Activated naive CD4-positive, alpha-beta T cell treated with anti-CD3 and anti-CD28 coated beads, Interleukin-2, amount 10 ng/mL, durations not matched to agents 7 days and 5 days (primary cell): ENCODE measurements at regions of chr1 and their contacts with region 1.

Region 1: GRCh38 chr1:22704440-22705067 is 6.1 kb upstream of the EPHB2 start:
- DNase-seq: peak; percentile 82
- H3K4me3 Mint-ChIP-seq: no peak overlapping the region
- H3K27ac Mint-ChIP-seq: no peak overlapping the region
- H3K4me1 Mint-ChIP-seq: no peaks in the 10 kb centered on the region
- H3K27me3 Mint-ChIP-seq: peaks cover 46% of the 10 kb centered on the region

Region 2: DNA sequence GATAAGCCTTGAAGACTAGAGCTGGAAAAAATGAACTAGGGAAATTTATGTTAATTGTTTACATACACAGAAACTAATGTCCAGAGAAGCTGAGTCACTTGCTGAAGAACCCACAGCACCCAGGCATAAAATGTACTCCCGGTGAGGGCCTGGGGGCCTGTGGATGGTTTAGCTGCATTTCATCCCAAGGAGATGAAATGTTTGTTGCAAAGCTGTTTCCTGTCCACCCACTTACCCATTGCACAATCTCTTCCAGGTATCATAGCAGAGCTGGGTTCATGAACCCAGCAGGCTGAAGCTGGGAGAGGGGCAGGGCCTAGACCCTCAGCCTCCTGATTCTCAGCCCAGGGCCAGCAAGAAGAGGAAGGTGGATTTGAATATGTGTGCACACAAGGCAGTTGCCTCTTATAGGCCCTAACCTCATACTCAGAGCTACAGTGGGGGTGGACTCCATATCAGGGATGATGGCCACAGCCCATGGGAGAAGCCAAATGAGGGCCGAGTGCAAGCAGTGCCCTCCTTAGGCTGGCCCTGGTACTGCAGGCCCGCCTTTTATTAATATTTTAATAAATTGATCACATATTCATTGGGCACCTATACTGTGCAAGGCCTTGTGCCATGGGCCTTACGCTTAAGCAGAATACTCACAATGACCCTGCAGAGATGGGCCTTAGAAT is 157.3 kb after region 1 on chr1:
- CTCF ChIA-PET with region 1: interaction called, 20 read pairs
- DNase-seq: no peak
- H3K4me3 Mint-ChIP-seq: no peak overlapping the region
- H3K27ac Mint-ChIP-seq: no peak overlapping the region
- H3K4me1 Mint-ChIP-seq: no peaks in the 10 kb centered on the region
- H3K27me3 Mint-ChIP-seq: peaks cover 13% of the 10 kb centered on the region

Region 3: DNA sequence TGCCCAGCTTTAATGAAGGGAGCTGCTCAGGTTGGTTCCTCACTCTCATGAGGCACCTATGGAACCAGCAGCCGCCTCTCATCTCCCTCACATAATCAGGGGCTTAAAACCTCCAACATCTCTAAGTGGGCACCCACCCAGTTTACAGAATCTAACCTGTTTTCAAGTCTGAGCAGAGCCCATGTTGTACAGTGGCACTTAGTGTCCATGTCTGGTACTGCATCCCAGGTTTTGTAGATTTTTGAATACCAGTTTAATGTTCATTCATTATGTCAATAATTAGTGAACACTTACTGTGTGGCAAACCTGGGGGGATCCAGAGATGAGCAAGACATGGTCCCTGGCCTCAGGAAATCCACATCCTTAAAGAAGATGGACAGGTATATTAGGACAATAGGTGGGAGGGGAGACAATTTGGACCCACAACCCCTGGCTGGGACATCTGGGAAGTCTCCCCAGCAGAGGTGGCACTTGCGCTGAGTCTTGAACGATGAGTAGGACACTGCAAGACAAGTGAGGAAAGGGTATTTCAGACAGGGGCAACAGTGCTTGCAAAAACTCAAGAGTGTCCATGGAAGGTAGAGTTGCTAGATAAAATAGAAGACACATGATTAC is 184.8 kb after region 1 on chr1:
- CTCF ChIA-PET with region 1: interaction called, 48 read pairs
- DNase-seq: no peak
- H3K4me3 Mint-ChIP-seq: no peak overlapping the region
- H3K27ac Mint-ChIP-seq: no peak overlapping the region
- H3K4me1 Mint-ChIP-seq: peaks cover 12% of the 10 kb centered on the region
- H3K27me3 Mint-ChIP-seq: peaks cover 42% of the 10 kb centered on the region

Region 4: GRCh38 chr1:22963044-22963677 is 258.6 kb after region 1 on chr1:
- CTCF ChIA-PET with region 1: interaction called, 14 read pairs
- DNase-seq: no peak
- H3K4me3 Mint-ChIP-seq: no peak overlapping the region
- H3K27ac Mint-ChIP-seq: no peak overlapping the region
- H3K4me1 Mint-ChIP-seq: no peaks in the 10 kb centered on the region
- H3K27me3 Mint-ChIP-seq: peaks cover 26% of the 10 kb centered on the region